ENCODE measurements at regions of chr5 and their contacts with region 1.

Region 1: DNA sequence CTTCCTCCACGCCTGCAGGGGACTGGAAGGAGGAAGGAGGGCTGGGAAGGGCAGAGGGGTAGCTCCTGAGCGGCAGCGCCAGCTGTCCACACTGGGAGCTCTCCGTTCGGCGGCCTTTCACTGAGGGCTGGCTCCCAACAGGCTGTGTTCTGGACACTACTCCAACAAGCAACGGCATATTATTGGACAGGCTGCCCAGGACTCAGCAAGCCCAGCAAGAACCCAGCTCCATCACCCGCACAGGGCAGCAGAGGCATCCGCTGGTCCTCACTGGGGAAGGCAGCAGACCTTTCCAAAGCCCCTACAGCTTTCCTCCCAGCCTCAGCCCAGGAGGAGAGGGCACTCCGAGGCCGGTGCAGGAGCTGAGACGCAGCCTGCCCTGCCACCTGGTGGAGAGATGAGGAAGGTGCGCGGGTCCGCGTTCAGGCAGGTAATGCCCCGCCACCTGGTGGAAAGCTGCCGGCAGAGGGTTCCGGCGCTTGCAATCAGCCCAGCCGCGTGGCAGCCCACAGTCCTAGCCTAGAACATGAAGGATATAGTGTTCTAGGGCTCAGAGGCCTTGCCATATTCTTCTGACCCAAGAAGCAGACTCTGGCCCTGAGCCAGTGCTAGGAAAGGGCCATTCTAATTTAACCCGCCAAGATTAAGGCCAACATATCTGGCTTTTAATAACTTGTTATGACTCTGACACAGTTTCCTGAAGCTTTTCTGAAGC is 74.4 kb downstream of the NRG2 start:
- DNase-seq: peak; percentile 94
- ATAC-seq: peak; percentile 100
- H3K4me3 Mint-ChIP-seq: no peak overlapping the region
- H3K27ac Mint-ChIP-seq: no peak overlapping the region
- H3K4me1 Mint-ChIP-seq: no peaks in the 10 kb centered on the region
- H3K27me3 Mint-ChIP-seq: peaks cover 13% of the 10 kb centered on the region
- CTCF ChIP-seq: peak; percentile 99

Region 2: GRCh38 chr5:139765409-139766217 is 203.1 kb before region 1 on chr5:
- CTCF ChIA-PET with region 1: interaction called, 18 read pairs
- POLR2A ChIA-PET with region 1: no interaction called
- intact Hi-C with region 1: no loop called
- DNase-seq: peak; percentile 83
- ATAC-seq: peak; percentile 94
- H3K4me3 Mint-ChIP-seq: peak overlapping the region; percentile 56
- H3K27ac Mint-ChIP-seq: peak overlapping the region; percentile 59
- H3K4me1 Mint-ChIP-seq: peaks cover 12% of the 10 kb centered on the region
- H3K27me3 Mint-ChIP-seq: peaks cover 21% of the 10 kb centered on the region
- CTCF ChIP-seq: peak; percentile 100

Region 3: DNA sequence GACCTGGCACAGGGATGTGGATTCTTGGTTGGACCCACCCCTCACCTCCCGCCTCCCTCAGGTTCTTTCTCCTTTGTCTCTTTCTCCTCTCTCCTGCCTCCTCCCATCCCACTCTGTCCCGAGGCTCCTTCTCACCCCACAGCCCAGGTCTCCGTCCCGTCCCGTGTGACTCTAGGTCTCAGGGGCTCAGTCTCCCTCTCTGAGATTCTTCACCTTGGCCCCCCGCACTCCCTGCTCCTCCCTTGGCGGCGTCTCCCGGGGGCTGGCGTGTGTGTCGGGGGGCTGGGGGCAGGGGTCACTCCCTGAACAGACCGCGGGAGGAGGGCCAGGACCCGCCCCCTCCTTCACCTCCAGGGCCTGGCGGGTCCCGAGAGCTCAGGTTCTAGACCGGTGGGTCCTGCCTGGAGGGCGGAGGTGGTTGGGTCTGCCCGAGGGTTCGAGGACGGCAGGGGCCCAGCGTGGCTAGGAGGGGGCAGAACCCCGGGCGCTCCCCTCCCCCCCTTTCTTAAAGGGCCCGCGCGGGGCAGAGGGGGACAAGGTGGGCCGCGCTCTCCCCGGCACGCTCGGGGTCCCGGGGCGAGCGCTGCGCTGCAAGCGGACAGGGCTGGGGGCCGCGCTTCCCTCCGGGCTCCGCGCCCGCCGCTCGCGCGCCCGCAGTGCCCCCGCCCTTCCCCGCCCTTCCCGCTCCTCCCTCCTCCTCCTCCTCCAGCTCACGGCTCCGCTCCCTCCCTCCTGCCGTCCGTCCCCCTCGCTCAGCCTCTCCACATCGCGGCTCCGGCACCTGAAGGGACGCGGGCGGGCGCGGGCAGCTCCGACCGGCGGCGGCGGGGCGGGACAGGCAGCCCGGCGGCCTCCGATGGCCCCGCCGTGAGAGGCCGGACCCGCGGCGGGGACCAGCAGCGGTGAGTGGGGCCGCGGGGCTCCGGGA is 173.4 kb before region 1 on chr5 and contains the start of gene PSD2:
- CTCF ChIA-PET with region 1: interaction called, 56 read pairs
- POLR2A ChIA-PET with region 1: no interaction called
- intact Hi-C with region 1: no loop called
- DNase-seq: peak; percentile 29
- ATAC-seq: peak; percentile 61
- H3K4me3 Mint-ChIP-seq: no peak within 1 kb of the TSS
- H3K27ac Mint-ChIP-seq: no peak within 1 kb of the TSS
- H3K4me1 Mint-ChIP-seq: no peaks in the 10 kb centered on the region
- H3K27me3 Mint-ChIP-seq: peaks cover 39% of the 10 kb centered on the region
- CTCF ChIP-seq: no peak
- total RNA-seq, gene PSD2: 0.14 TPM in 1 of 2 experiments, not detected in the other

Region 4: GRCh38 chr5:139856714-139857113 is 112.0 kb before region 1 on chr5:
- CTCF ChIA-PET with region 1: interaction called, 46 read pairs
- POLR2A ChIA-PET with region 1: no interaction called
- intact Hi-C with region 1: no loop called
- DNase-seq: no peak
- ATAC-seq: no peak
- H3K4me3 Mint-ChIP-seq: no peak overlapping the region
- H3K27ac Mint-ChIP-seq: no peak overlapping the region
- H3K4me1 Mint-ChIP-seq: no peaks in the 10 kb centered on the region
- H3K27me3 Mint-ChIP-seq: no peaks in the 10 kb centered on the region
- CTCF ChIP-seq: no peak

Region 5: GRCh38 chr5:139888370-139888769 is 80.3 kb before region 1 on chr5:
- CTCF ChIA-PET with region 1: interaction called, 24 read pairs
- POLR2A ChIA-PET with region 1: no interaction called
- intact Hi-C with region 1: no loop called
- DNase-seq: no peak
- ATAC-seq: no peak
- H3K4me3 Mint-ChIP-seq: no peak overlapping the region
- H3K27ac Mint-ChIP-seq: no peak overlapping the region
- H3K4me1 Mint-ChIP-seq: no peaks in the 10 kb centered on the region
- H3K27me3 Mint-ChIP-seq: peaks cover 3% of the 10 kb centered on the region
- CTCF ChIP-seq: no peak

Region 6: GRCh38 chr5:139908749-139909148 is 60.0 kb before region 1 on chr5:
- CTCF ChIA-PET with region 1: interaction called, 16 read pairs
- POLR2A ChIA-PET with region 1: no interaction called
- intact Hi-C with region 1: no loop called
- DNase-seq: no peak
- ATAC-seq: no peak
- H3K4me3 Mint-ChIP-seq: no peak overlapping the region
- H3K27ac Mint-ChIP-seq: no peak overlapping the region
- H3K4me1 Mint-ChIP-seq: no peaks in the 10 kb centered on the region
- H3K27me3 Mint-ChIP-seq: peaks cover 3% of the 10 kb centered on the region
- CTCF ChIP-seq: no peak

Region 7: DNA sequence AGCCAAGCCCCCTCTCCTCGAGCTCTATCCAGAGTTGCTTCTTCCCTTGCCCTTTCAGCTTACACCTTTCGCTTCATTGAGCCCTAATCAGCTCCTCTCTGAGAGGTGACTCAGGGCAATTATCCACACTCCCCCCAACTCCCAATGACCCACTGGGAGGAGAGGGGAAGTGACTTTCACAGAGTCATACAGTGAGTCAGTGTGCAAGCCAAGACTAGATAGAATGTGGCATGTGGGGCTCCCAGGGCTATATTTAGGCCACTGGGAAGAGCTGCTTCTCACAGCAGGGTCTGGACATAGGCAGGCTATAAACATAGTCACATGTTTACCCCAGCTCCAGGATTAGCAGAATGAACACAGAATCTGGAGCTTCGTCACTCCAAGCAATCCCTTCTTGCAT is 17.0 kb after region 1 on chr5:
- CTCF ChIA-PET with region 1: interaction called, 52 read pairs
- POLR2A ChIA-PET with region 1: no interaction called
- intact Hi-C with region 1: no loop called
- DNase-seq: no peak
- ATAC-seq: no peak
- H3K4me3 Mint-ChIP-seq: no peak overlapping the region
- H3K27ac Mint-ChIP-seq: no peak overlapping the region
- H3K4me1 Mint-ChIP-seq: no peaks in the 10 kb centered on the region
- H3K27me3 Mint-ChIP-seq: peaks cover 15% of the 10 kb centered on the region
- CTCF ChIP-seq: no peak

Region 8: DNA sequence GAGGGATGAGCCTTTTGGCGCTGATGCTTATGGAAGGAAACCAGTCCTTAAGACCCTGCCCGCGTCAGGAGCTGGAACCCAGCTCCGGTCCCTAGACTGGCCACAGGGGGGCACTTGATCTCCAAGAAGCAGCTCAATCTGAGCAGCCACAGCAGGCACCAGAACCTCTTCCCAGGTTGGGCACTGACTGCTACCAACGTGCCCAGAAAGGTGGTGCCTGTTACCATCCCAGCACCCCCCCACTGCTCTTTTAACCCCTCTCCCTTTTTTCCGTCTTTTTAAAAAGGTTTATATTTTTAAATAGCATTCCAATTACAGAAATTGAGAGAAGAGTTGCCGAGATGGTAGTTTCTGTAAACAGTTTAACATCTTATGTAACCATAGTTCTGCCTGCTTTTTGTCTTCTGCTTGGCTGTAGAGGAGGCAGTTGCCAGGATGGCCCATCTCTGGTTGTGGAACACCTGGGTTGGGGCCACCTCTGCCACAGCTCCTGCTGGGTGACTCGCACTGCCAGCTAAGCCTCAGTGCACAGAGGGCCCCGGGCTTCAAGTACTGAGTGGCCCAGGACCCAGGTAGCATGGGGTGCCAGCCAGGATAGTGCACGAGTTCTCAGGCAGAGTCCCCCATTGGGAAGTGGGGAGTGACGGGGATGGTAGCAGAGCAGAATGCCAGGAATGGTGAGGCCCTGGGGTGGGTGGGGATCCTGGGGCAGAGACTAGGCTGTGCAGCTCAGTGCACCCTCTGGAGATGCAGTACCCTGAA is 271.4 kb after region 1 on chr5:
- CTCF ChIA-PET with region 1: no interaction called
- POLR2A ChIA-PET with region 1: no interaction called
- intact Hi-C with region 1: no loop called
- DNase-seq: peak; percentile 83
- ATAC-seq: peak; percentile 86
- H3K4me3 Mint-ChIP-seq: no peak overlapping the region
- H3K27ac Mint-ChIP-seq: peak overlapping the region; percentile 5
- H3K4me1 Mint-ChIP-seq: peaks cover 4% of the 10 kb centered on the region
- H3K27me3 Mint-ChIP-seq: no peaks in the 10 kb centered on the region
- CTCF ChIP-seq: peak; percentile 71